Panc1 (cell line): ENCODE measurements at regions of chr1 and their contacts with region 1.

Region 1: GRCh38 chr1:84772428-84772943 is 82.2 kb upstream of the SSX2IP start:
- DNase-seq: peak; percentile 82
- ATAC-seq: peak; percentile 93
- H3K4me3 ChIP-seq: no peak overlapping the region
- H3K27ac ChIP-seq: no peak overlapping the region
- H3K4me1 ChIP-seq: peaks cover 6% of the 10 kb centered on the region; the same call in 1 of the 2 replicates
- H3K27me3 ChIP-seq: 0 out of 2 replicates have a peak, but pooled peaks cover 6% of the 10 kb centered on the region
- CTCF ChIP-seq: peak; percentile 100

Region 2: GRCh38 chr1:83905315-83905907 is 867.1 kb before region 1 on chr1:
- CTCF ChIA-PET with region 1: no interaction called
- POLR2A ChIA-PET with region 1: no interaction called
- in situ Hi-C with region 1: no loop called
- intact Hi-C with region 1: loop called (anchors 5 kb)
- DNase-seq: peak; percentile 43
- ATAC-seq: no peak
- H3K4me3 ChIP-seq: no peak overlapping the region
- H3K27ac ChIP-seq: no peak overlapping the region
- H3K4me1 ChIP-seq: no peaks in the 10 kb centered on the region
- H3K27me3 ChIP-seq: no peaks in the 10 kb centered on the region
- CTCF ChIP-seq: peak; percentile 81; the same call in 1 of the 2 replicates

Region 3: DNA sequence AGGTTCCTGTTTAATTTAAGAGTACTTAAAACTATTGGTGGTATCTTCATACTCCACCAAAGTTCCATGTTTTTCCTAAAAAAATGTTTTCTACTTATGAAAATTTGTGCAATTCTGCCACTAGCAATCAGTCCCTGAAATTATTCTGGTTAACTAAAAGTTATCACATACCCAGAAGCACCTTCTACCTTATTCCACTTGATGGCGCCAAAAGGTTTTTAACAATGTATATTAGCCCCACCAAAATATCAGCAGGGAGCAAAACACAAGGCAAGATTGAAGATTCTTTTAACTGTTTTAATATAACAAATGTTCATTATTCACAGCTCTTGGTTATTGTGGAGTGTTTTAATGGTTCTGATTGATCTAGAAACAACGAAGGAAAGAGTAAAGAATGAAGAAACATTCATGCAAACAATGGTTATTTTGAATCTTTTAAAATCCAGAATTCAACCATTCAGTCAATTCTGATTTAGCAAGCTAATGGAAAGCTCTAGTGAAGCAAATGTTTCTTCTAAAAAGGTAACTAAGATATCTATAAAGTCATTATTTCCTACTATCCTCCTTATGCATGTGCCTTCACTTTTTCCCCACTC is 840.7 kb before region 1 on chr1:
- CTCF ChIA-PET with region 1: no interaction called
- POLR2A ChIA-PET with region 1: no interaction called
- in situ Hi-C with region 1: no loop called
- intact Hi-C with region 1: loop called (anchors 10 kb)
- DNase-seq: peak; percentile 56
- ATAC-seq: peak; percentile 93
- H3K4me3 ChIP-seq: no peak overlapping the region
- H3K27ac ChIP-seq: no peak overlapping the region
- H3K4me1 ChIP-seq: no peaks in the 10 kb centered on the region
- H3K27me3 ChIP-seq: no peaks in the 10 kb centered on the region
- CTCF ChIP-seq: peak; percentile 88; the same call in 1 of the 2 replicates

Region 4: DNA sequence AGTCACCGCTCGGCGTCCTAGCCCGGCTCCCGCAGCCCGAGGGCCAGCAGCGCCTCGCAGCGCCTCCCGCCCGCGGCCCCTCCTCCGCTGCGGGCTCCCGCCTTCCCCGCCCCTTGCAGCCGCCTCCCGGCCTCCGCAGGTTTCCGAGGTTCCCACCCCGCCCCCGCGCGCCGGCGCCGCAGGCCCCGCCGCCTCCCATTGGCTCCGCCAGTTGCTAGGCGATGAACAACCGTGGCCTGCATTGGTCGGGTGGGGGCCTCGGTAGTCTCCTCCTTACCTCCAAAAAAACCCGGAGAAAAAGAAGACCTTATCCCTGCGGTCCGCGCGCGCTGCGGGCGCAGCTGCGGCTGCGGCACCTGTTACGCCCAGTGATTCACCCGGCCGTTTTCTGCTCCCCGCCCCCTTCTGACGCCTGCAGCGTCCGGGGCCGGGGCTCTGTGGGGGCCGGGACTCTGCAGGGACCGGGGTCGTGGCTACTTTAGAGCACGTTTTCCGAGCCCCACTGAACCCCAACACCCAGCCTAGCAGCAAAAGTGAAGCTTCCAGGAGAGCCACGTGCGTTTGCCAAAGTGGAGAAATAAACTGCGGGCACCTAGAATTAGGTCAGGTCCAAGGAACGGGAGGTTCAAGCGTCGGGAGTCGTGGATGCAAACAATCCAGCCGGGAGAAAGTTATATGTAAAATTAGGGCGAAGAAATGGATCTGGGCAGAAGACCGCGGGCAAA is 81.9 kb before region 1 on chr1 and contains the start of gene SSX2IP:
- CTCF ChIA-PET with region 1: no interaction called
- POLR2A ChIA-PET with region 1: no interaction called
- in situ Hi-C with region 1: no loop called
- intact Hi-C with region 1: no loop called
- DNase-seq: peak; percentile 96
- ATAC-seq: peak; percentile 98
- H3K4me3 ChIP-seq: peak within 1 kb of the TSS; percentile 65 to 83
- H3K27ac ChIP-seq: peak within 1 kb of the TSS; percentile 91
- H3K4me1 ChIP-seq: peaks cover 37% of the 10 kb centered on the region
- H3K27me3 ChIP-seq: no peaks in the 10 kb centered on the region
- CTCF ChIP-seq: no peak
- total RNA-seq, gene SSX2IP: 81.8 TPM

Region 5: GRCh38 chr1:84721152-84721551 is 51.3 kb before region 1 on chr1:
- CTCF ChIA-PET with region 1: interaction called, 11 read pairs
- POLR2A ChIA-PET with region 1: no interaction called
- in situ Hi-C with region 1: no loop called
- intact Hi-C with region 1: no loop called
- DNase-seq: no peak
- ATAC-seq: no peak
- H3K4me3 ChIP-seq: no peak overlapping the region
- H3K27ac ChIP-seq: no peak overlapping the region
- H3K4me1 ChIP-seq: no peaks in the 10 kb centered on the region
- H3K27me3 ChIP-seq: peaks cover 10% of the 10 kb centered on the region; the same call in 1 of the 2 replicates
- CTCF ChIP-seq: no peak

Region 6: DNA sequence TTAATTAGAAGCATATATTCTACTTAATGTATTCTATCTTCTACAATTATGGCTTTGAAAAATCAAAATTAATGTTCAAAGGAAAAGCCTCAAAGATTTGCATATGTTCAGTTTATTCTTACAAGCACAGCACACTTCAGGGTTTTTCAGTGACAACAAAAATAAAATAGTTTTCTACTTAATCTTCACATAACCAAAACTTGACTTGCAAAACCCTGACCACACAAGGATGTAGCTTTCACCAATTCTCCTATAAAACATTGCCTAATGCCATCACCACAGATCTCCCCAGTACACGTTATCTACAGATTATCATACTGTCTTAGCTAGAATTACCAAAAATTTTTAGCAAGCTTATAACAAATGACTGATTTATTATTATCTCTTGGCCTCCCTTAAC is 97.2 kb after region 1 on chr1:
- CTCF ChIA-PET with region 1: no interaction called
- POLR2A ChIA-PET with region 1: no interaction called
- in situ Hi-C with region 1: no loop called
- intact Hi-C with region 1: no loop called
- DNase-seq: no peak
- ATAC-seq: no peak
- H3K4me3 ChIP-seq: no peak overlapping the region
- H3K27ac ChIP-seq: no peak overlapping the region
- H3K4me1 ChIP-seq: no peaks in the 10 kb centered on the region
- H3K27me3 ChIP-seq: peaks cover 13% of the 10 kb centered on the region
- CTCF ChIP-seq: no peak